Posterior cingulate gyrus (tissue), 11 donors: ENCODE measurements at regions of chr2 and their contacts with region 1.

Region 1: GRCh38 chr2:23404426-23404825 is 19.4 kb downstream of the KLHL29 start:
- DNase-seq: peak in 1 of 10 donors; percentile 19

Region 2: GRCh38 chr2:23268467-23269263 is 135.8 kb before region 1 on chr2:
- intact Hi-C with region 1: no loop called
- DNase-seq: no peak

Region 3: DNA sequence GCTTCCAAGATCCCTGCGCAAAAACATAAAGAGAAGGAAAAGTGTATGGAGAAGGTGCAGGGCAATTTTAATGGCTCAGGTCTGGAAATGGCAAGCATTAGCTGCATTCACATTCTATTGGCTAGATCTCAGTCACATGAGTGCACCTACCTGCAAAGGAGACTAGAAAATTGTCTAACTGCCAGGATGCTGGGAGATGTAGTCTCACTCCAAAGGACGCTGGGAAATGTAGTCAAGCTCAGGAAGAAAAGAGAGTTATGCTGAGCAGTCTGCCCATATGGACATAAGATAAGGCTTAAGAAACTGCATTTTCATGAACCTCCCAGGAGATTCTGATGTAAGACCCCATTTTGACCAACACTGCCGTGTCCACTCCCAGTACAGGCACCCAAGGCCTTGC is 29.0 kb before region 1 on chr2:
- intact Hi-C with region 1: no loop called
- DNase-seq: no peak

Region 4: DNA sequence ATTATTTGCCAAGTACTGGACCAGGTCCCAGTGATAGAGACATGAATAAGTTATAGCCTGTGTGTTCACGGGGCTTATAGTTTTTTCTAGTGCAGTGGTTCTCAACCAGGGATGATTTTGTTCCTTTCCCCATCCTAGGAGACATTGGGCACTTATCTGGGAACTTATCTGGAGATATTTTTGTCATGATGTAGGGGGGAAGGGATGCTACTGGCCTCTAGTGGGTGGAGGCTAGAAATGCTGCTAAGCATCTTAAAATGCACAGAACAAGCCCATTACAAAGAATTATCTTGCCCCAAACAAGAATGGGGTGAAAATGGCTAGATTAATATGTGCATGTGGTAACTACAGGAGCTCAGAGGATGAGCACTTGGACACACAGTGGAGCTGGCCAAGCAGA is 55.8 kb after region 1 on chr2:
- intact Hi-C with region 1: no loop called
- DNase-seq: no peak

Region 5: DNA sequence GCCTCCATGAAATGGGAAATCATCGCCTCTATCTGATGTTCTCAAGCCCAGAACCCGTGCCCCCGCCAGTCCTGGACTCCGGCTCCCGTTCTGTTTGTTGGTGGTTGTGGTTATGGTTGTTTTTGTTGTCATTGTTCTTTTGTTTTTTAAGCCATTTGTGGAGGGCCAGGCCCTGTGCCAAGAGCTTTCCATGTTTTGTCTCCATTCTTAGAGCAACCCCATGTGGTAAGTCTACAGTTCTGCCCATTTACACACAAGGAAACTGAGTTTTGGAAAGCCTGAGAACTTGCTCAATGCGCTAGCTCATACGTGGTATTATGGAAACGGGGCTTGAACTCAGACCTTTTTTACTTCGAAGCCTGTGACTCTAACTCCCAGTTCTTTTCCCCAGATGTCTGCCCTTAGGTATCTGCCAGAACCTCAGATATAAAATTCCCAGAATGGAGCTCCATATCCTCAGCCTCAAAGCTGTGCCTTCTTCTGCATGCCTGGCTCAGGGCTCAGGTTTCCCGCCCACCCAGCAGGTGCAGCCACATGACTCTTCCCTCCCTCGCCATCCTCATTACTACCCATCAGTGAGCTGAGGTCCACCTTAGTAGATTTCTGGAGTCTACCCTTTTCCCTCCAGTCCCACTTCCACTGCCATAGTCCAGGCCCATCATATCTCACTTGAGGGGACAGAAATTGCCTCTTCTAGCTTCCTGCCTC is 174.7 kb after region 1 on chr2:
- intact Hi-C with region 1: loop called (anchors 5 kb)
- DNase-seq: peak in 3 of 10 donors; percentile 19 to 65 (median 48)

Region 6: DNA sequence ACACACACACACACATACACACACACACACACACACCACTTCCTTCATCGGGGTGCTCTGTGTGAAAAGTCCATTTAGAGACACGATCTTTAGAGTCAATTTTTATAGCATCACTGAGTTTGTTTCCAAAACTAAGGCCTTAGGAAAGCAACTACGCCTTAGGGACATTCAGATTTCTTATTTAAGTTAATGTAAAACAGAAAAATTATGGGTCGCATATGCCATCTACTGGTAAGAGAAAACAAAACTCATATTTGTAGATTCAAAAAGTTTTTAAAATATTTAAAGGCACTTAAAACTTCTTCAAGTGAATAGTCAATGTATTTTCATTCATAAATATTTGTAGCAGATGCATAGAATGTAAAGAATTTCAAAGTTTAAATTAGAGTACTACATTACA is 356.3 kb after region 1 on chr2:
- intact Hi-C with region 1: loop called (anchors 10 kb)
- DNase-seq: no peak